ENCODE measurements at regions of chr16 and their contacts with region 1.

Region 1: GRCh38 chr16:66399930-66400329 is 27.2 kb upstream of the BEAN1 start:
- DNase-seq: no peak
- ATAC-seq: no peak
- H3K4me3 ChIP-seq: no peak overlapping the region
- H3K4me3 Mint-ChIP-seq: no peak overlapping the region
- H3K27ac ChIP-seq: no peak overlapping the region
- H3K27ac Mint-ChIP-seq: no peak overlapping the region
- H3K4me1 ChIP-seq: no peaks in the 10 kb centered on the region
- H3K4me1 Mint-ChIP-seq: no peaks in the 10 kb centered on the region
- H3K27me3 ChIP-seq: no peaks in the 10 kb centered on the region
- H3K27me3 Mint-ChIP-seq: peaks cover 4% of the 10 kb centered on the region
- CTCF ChIP-seq: no peak

Region 2: DNA sequence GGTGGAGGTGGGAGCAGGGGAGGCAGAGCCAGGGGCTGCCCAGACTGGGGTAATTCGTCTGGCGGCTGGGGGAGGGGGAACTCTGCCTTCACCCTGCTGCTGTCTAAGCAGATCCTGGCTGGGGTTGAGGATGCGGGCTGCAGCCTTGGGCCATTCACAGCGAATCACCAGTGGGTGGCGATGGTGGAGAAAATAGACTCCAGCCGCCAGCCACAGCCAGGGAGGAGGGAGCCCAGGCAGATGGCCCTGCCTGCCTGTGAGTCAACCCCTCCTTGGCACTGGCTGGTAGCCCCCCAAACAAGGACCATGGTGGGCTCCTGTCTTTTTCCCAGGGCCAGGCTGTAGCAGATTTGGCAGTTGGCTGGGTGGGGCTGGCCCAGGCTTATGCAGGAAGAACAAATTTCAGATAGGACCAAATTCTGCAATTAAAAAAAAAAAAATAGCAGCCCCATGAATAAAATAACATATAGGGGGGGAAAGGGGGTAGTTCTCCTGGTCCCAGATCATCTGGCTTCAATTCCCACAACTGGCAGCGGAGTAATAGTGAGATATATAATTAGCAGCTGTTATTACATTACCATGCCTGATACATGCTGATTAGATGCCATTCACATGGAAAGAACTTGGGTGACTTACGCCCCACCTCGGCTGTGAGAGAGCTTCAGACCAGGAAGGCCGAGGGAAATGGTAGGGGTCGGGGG is 75.0 kb before region 1 on chr16:
- CTCF ChIA-PET with region 1: no interaction called
- POLR2A ChIA-PET with region 1: no interaction called
- intact Hi-C with region 1: no loop called
- DNase-seq: no peak
- ATAC-seq: no peak
- H3K4me3 ChIP-seq: no peak overlapping the region
- H3K4me3 Mint-ChIP-seq: no peak overlapping the region
- H3K27ac ChIP-seq: no peak overlapping the region
- H3K27ac Mint-ChIP-seq: no peak overlapping the region
- H3K4me1 ChIP-seq: no peaks in the 10 kb centered on the region
- H3K4me1 Mint-ChIP-seq: no peaks in the 10 kb centered on the region
- H3K27me3 ChIP-seq: no peaks in the 10 kb centered on the region
- H3K27me3 Mint-ChIP-seq: peaks cover 22% of the 10 kb centered on the region
- CTCF ChIP-seq: no peak

Region 3: DNA sequence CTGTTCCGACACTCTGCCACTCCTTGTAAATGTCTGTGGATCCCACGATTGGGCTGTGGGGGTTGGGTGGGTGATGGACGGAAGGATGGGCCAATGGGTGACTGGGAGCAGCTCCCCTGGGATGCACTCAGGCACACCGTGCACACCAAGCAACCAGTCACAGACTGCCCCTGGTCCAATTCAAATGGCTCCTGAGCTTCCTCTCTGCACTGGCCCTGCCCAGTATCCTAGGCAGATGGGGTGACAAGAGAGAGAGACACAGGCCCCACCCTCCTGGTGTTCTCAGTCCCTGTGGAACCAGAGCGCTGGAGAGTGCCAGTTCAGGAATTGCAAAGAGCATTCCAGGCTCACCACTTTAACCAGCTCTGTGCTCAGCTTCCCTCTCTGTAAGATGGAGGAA is 59.9 kb after region 1 on chr16:
- CTCF ChIA-PET with region 1: interaction called, 4 read pairs
- POLR2A ChIA-PET with region 1: no interaction called
- intact Hi-C with region 1: loop called in 1 of 2 experiments (anchors 2 kb)
- DNase-seq: no peak
- ATAC-seq: no peak
- H3K4me3 ChIP-seq: no peak overlapping the region
- H3K4me3 Mint-ChIP-seq: no peak overlapping the region
- H3K27ac ChIP-seq: no peak overlapping the region
- H3K27ac Mint-ChIP-seq: no peak overlapping the region
- H3K4me1 ChIP-seq: no peaks in the 10 kb centered on the region
- H3K4me1 Mint-ChIP-seq: peaks cover 4% of the 10 kb centered on the region
- H3K27me3 ChIP-seq: no peaks in the 10 kb centered on the region
- H3K27me3 Mint-ChIP-seq: peaks cover 17% of the 10 kb centered on the region
- CTCF ChIP-seq: no peak

Region 4: DNA sequence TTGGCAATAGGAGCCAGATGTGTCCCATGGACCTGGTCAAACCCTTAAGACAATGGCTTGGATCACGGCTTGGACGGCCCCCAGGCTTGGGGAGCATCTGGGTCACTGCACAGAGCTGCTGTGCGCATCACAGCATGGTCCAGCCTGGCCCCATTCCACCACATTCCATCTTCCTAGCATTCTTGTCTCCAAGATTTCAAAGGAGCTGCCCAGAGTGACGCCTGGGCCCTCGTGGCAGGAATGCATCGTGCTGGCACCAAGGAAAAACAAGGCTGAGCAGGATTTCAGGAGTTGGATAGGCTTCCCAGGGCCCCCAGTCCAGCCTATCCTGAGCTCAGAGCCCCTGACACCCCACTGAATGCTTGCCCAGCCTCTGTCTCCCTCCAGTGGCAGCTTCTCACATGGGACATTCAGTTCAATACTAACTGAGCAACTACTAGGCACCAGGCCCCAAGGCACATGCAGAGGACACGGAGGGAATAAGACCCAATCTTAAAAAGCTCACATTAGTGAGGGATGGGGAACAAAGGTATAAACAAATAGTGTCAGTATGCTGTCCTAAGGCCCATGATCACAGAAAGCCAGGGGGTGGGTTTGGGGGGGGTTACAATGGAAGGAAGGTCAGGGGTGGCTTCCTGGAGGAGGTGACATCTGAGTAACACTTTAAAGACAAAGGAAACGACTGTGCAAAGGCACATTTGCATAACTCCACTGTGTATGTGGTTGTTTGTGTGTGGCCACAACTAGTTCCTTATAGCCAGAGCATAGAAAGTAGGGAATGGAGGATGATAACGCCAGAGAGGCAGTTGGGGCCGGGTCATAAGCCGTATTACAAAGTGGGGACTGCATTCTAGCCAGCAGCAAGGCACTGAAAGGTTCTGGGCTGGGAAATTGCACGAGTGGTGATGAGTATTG is 115.9 kb after region 1 on chr16:
- CTCF ChIA-PET with region 1: no interaction called
- POLR2A ChIA-PET with region 1: no interaction called
- intact Hi-C with region 1: no loop called
- DNase-seq: peak in 2 of 9 experiments; percentile 30 to 43
- ATAC-seq: no peak
- H3K4me3 ChIP-seq: peak overlapping the region; percentile 12 to 20
- H3K4me3 Mint-ChIP-seq: peak overlapping the region; percentile 30
- H3K27ac ChIP-seq: peak overlapping the region; percentile 28 to 98
- H3K27ac Mint-ChIP-seq: peak overlapping the region; percentile 91
- H3K4me1 ChIP-seq: peaks cover 42% of the 10 kb centered on the region
- H3K4me1 Mint-ChIP-seq: peaks cover 57% of the 10 kb centered on the region
- H3K27me3 ChIP-seq: no peaks in the 10 kb centered on the region
- H3K27me3 Mint-ChIP-seq: no peaks in the 10 kb centered on the region
- CTCF ChIP-seq: no peak

Region 5: GRCh38 chr16:68200088-68200783 is 1800.3 kb after region 1 on chr16:
- CTCF ChIA-PET with region 1: no interaction called
- POLR2A ChIA-PET with region 1: no interaction called
- intact Hi-C with region 1: no loop called
- DNase-seq: peak in 1 of 9 experiments; percentile 17
- ATAC-seq: peak; percentile 38
- H3K4me3 ChIP-seq: no peak overlapping the region
- H3K4me3 Mint-ChIP-seq: no peak overlapping the region
- H3K27ac ChIP-seq: no peak overlapping the region
- H3K27ac Mint-ChIP-seq: peak overlapping the region; percentile 61
- H3K4me1 ChIP-seq: no peaks in the 10 kb centered on the region
- H3K4me1 Mint-ChIP-seq: peaks cover 20% of the 10 kb centered on the region
- H3K27me3 ChIP-seq: no peaks in the 10 kb centered on the region
- H3K27me3 Mint-ChIP-seq: no peaks in the 10 kb centered on the region
- CTCF ChIP-seq: no peak